B cell (primary cell): ENCODE measurements at regions of chr19 and their contacts with region 1.

Region 1: DNA sequence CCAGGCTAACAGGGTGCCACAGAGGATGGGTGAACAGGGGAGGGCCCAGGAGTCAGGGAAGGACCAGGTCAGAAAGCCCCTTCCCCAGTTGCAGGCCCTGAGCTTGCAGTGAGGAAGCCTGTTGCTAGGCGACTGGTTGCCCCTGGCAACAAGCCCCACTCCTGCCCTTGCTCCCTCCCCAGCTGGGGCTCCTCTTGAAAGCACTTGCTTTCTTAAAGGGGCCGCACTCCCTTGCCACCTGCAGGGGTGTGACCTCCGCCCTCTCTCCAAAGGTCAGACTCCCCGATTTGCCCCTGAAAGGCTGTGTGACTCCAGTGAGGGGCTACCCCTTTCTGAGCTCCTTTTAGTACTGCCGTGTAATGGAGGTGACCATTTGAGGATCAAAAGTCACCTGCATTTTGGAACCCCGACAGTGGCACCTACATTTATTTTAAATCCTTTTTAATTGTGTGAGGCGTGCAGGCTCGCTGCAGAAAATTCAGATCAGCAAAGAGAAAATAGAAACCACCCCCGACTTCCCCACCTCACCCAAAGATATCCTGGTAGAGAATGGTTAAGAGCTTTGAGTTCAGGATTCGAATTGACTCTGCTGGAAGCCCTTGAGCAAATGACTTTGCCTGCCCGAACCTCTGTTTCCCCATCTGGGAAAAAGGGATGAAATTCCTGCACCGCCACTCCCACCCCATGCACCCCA is 4.8 kb downstream of the FCHO1 start:
- DNase-seq: peak; percentile 82
- ATAC-seq: peak; percentile 4
- H3K4me3 ChIP-seq: peak overlapping the region in 1 of 5 experiments; percentile 34
- H3K4me3 Mint-ChIP-seq: peak overlapping the region; percentile 84
- H3K27ac ChIP-seq: peak overlapping the region; percentile 56 to 70
- H3K27ac Mint-ChIP-seq: peak overlapping the region; percentile 93
- H3K4me1 ChIP-seq: peaks cover 51 to 65% of the 10 kb centered on the region in 2 donors
- H3K4me1 Mint-ChIP-seq: peaks cover 79% of the 10 kb centered on the region
- H3K27me3 ChIP-seq: no peaks in the 10 kb centered on the region
- H3K27me3 Mint-ChIP-seq: no peaks in the 10 kb centered on the region
- CTCF ChIP-seq: no peak

Region 2: GRCh38 chr19:17448131-17448967 is 307.8 kb before region 1 on chr19 and contains the start of gene TMEM221:
- CTCF ChIA-PET with region 1: no interaction called
- POLR2A ChIA-PET with region 1: interaction called, 11 read pairs
- intact Hi-C with region 1: no loop called
- DNase-seq: peak; percentile 73
- ATAC-seq: peak; percentile 86
- H3K4me3 ChIP-seq: peak within 1 kb of the TSS in 3 of 5 experiments; percentile 3 to 29 (median 15)
- H3K4me3 Mint-ChIP-seq: peak within 1 kb of the TSS; percentile 48
- H3K27ac ChIP-seq: no peak within 1 kb of the TSS
- H3K27ac Mint-ChIP-seq: no peak within 1 kb of the TSS
- H3K4me1 ChIP-seq: peaks cover 6 to 12% of the 10 kb centered on the region in 2 donors
- H3K4me1 Mint-ChIP-seq: peaks cover 13% of the 10 kb centered on the region
- H3K27me3 ChIP-seq: peaks cover 0 to 53% (median 15%) of the 10 kb centered on the region in 4 experiments
- H3K27me3 Mint-ChIP-seq: peaks cover 28% of the 10 kb centered on the region
- CTCF ChIP-seq: peak; percentile 68
- total RNA-seq, gene TMEM221: not detected in 2 replicates

Region 3: GRCh38 chr19:17703824-17704463 is 52.2 kb before region 1 on chr19:
- CTCF ChIA-PET with region 1: interaction called, 20 read pairs
- POLR2A ChIA-PET with region 1: no interaction called
- intact Hi-C with region 1: loop called (anchors 5 kb)
- DNase-seq: peak; percentile 80
- ATAC-seq: peak; percentile 93
- H3K4me3 ChIP-seq: no peak overlapping the region
- H3K4me3 Mint-ChIP-seq: no peak overlapping the region
- H3K27ac ChIP-seq: no peak overlapping the region
- H3K27ac Mint-ChIP-seq: peak overlapping the region; percentile 11
- H3K4me1 ChIP-seq: no peaks in the 10 kb centered on the region
- H3K4me1 Mint-ChIP-seq: peaks cover 5% of the 10 kb centered on the region
- H3K27me3 ChIP-seq: peaks cover 0 to 9% (median under 1%) of the 10 kb centered on the region in 4 experiments
- H3K27me3 Mint-ChIP-seq: peaks cover 11% of the 10 kb centered on the region
- CTCF ChIP-seq: peak; percentile 87

Region 4: DNA sequence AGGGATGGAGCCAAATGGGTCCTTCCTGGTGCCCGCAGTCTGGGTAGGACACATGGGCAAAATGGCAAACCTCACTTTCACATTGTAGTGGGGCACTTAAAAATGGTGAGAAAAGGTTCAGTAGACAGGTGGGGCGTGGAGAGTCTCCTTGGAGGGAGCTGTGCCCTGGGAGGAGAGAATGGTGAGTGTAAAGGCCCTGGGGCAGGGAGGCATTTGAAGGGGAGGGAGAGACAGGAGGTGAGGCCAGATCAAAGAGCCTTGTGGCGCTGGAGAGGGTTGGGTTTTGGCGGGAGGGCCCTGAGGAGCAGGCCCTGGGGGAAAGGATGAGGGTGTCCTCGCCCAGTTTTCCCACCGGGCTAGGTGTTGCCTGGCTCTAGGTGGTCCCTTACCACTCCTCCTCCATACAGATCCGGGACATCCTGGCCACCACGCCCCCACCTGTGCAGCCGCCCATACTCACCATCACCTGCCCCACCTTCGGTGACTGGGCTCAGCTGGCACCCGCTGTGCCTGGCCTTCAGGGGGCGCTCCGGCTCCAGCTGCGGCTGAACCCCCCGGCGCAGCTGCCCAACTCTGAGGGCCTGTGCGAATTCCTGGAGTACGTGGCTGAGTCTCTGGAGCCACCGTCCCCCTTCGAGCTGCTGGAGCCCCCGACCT is 30.6 kb before region 1 on chr19:
- CTCF ChIA-PET with region 1: interaction called, 20 read pairs
- POLR2A ChIA-PET with region 1: interaction called, 14 read pairs
- intact Hi-C with region 1: no loop called
- DNase-seq: peak; percentile 41
- ATAC-seq: peak; percentile 41
- H3K4me3 ChIP-seq: no peak overlapping the region
- H3K4me3 Mint-ChIP-seq: no peak overlapping the region
- H3K27ac ChIP-seq: no peak overlapping the region
- H3K27ac Mint-ChIP-seq: no peak overlapping the region
- H3K4me1 ChIP-seq: peaks cover 16 to 18% of the 10 kb centered on the region in 2 donors
- H3K4me1 Mint-ChIP-seq: peaks cover 25% of the 10 kb centered on the region
- H3K27me3 ChIP-seq: no peaks in the 10 kb centered on the region
- H3K27me3 Mint-ChIP-seq: no peaks in the 10 kb centered on the region
- CTCF ChIP-seq: peak; percentile 66

Region 5: GRCh38 chr19:17766543-17767131 is 10.5 kb after region 1 on chr19:
- CTCF ChIA-PET with region 1: interaction called, 122 read pairs
- POLR2A ChIA-PET with region 1: interaction called, 14 read pairs
- intact Hi-C with region 1: no loop called
- DNase-seq: peak; percentile 74
- ATAC-seq: peak; percentile 62
- H3K4me3 ChIP-seq: no peak overlapping the region
- H3K4me3 Mint-ChIP-seq: peak overlapping the region; percentile 29
- H3K27ac ChIP-seq: no peak overlapping the region
- H3K27ac Mint-ChIP-seq: peak overlapping the region; percentile 72
- H3K4me1 ChIP-seq: peaks cover 4 to 12% of the 10 kb centered on the region in 2 donors
- H3K4me1 Mint-ChIP-seq: peaks cover 20% of the 10 kb centered on the region
- H3K27me3 ChIP-seq: no peaks in the 10 kb centered on the region
- H3K27me3 Mint-ChIP-seq: no peaks in the 10 kb centered on the region
- CTCF ChIP-seq: peak; percentile 78

Region 6: DNA sequence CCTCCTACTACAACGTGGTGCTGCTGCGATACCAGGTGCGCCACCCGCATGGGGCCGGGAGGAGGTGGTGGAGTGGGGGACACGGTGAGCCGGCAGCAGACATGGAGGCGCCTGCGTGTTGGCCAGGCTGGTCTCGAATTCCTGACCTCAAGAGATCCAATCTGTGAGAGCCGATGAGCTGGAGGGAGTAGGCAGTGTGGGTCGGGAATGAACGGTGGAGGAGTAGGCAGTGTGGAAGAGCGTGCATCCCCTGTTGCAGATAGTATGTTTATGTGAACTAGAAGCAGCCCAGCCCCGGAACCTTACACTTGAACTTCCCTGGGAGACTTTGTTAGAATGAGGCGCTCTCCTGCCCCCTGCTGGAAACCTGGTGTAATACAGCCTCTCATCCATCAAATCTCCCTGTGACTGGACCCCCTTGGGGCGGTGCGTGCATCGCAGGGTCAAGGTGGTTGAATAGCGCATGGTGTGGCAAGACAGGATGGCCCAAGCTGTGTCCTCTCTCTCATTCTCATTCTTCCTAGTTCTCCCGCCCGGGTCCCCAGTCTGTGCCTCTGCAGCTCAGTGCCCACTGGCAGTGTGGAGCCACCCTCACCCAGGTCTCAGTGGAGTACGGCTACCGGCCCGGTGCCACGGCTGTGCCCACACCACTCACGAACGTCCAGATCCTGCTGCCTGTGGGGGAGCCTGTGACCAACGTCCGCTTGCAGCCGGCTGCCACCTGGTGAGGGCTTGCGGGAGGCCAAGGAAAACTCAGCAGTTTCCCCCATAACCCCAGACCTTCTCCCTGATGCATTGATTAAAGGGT is 28.3 kb after region 1 on chr19:
- CTCF ChIA-PET with region 1: interaction called, 12 read pairs
- POLR2A ChIA-PET with region 1: no interaction called
- intact Hi-C with region 1: no loop called
- DNase-seq: peak; percentile 83
- ATAC-seq: peak; percentile 86
- H3K4me3 ChIP-seq: no peak overlapping the region
- H3K4me3 Mint-ChIP-seq: no peak overlapping the region
- H3K27ac ChIP-seq: no peak overlapping the region
- H3K27ac Mint-ChIP-seq: peak overlapping the region; percentile 51
- H3K4me1 ChIP-seq: peaks cover 0 to 6% of the 10 kb centered on the region in 2 donors
- H3K4me1 Mint-ChIP-seq: peaks cover 5% of the 10 kb centered on the region
- H3K27me3 ChIP-seq: no peaks in the 10 kb centered on the region
- H3K27me3 Mint-ChIP-seq: no peaks in the 10 kb centered on the region
- CTCF ChIP-seq: peak; percentile 85

Region 7: GRCh38 chr19:17932485-17933338 is 176.6 kb after region 1 on chr19 and contains the start of gene CCDC124:
- CTCF ChIA-PET with region 1: interaction called, 10 read pairs
- POLR2A ChIA-PET with region 1: interaction called, 3 read pairs
- intact Hi-C with region 1: no loop called
- DNase-seq: peak; percentile 97
- ATAC-seq: peak; percentile 95
- H3K4me3 ChIP-seq: peak within 1 kb of the TSS; percentile 72 to 88 (median 79)
- H3K4me3 Mint-ChIP-seq: peak within 1 kb of the TSS; percentile 96
- H3K27ac ChIP-seq: peak within 1 kb of the TSS; percentile 93 to 96
- H3K27ac Mint-ChIP-seq: peak within 1 kb of the TSS; percentile 97
- H3K4me1 ChIP-seq: peaks cover 11 to 19% of the 10 kb centered on the region in 2 donors
- H3K4me1 Mint-ChIP-seq: peaks cover 22% of the 10 kb centered on the region
- H3K27me3 ChIP-seq: no peaks in the 10 kb centered on the region
- H3K27me3 Mint-ChIP-seq: no peaks in the 10 kb centered on the region
- CTCF ChIP-seq: peak; percentile 90
- total RNA-seq, gene CCDC124: 25.0 and 26.9 TPM in 2 replicates